ENCODE measurements at regions of chr19 and their contacts with region 1.

Region 1: DNA sequence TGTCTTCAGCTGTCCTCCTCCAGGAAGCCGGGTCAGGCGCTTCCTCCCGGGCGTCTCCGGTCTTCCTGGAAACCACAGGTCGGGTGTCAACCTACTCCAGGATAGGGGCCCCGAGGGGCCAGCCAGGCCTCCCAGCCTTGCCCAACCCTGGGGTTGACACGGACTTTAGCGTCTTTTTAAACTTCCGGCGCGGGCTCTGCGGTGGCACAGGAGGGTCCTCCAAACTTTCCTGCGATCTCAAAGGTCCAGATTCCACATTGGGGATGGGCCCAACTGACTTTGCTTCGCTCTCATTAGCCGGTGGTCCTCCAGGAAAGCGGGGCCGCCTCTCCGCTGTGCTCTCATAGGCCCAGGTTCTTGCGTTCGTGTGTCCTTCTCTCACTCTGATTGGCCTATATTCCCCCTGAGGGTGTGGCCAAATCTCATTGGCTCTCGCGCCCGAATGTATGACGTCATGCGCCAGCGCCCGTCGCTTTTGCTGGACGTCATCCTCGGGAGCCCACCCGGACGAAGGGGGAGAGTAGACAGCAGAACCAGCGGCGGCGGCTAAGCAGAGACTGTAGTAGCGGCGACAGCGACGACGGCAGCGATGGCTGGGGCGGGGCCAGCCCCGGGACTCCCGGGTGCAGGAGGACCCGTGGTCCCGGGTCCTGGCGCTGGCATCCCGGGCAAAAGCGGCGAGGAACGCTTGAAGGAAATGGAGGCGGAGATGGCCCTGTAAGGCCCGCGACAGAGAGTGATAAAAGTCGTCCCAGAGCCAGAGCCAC is at the start of gene RBM42:
- DNase-seq: peak; percentile 92 to 99 (median 97)
- ATAC-seq: peak; percentile 99 to 100 (median 100)
- H3K4me3 ChIP-seq: peak within 1 kb of the TSS; percentile 82 to 97
- H3K4me3 Mint-ChIP-seq: peak within 1 kb of the TSS; percentile 93 to 100 (median 100)
- H3K27ac ChIP-seq: peak within 1 kb of the TSS; percentile 77
- H3K27ac Mint-ChIP-seq: peak within 1 kb of the TSS; percentile 97 to 98
- H3K4me1 ChIP-seq: peaks cover 4 to 18% of the 10 kb centered on the region in 2 experiments
- H3K4me1 Mint-ChIP-seq: peaks cover 25 to 29% (median 25%) of the 10 kb centered on the region in 3 donors
- H3K27me3 ChIP-seq: no peaks in the 10 kb centered on the region
- H3K27me3 Mint-ChIP-seq: peaks cover 0 to 3% of the 10 kb centered on the region in 2 donors
- total RNA-seq, gene RBM42: 37.6 to 74.0 (median 68.4) TPM

Region 2: DNA sequence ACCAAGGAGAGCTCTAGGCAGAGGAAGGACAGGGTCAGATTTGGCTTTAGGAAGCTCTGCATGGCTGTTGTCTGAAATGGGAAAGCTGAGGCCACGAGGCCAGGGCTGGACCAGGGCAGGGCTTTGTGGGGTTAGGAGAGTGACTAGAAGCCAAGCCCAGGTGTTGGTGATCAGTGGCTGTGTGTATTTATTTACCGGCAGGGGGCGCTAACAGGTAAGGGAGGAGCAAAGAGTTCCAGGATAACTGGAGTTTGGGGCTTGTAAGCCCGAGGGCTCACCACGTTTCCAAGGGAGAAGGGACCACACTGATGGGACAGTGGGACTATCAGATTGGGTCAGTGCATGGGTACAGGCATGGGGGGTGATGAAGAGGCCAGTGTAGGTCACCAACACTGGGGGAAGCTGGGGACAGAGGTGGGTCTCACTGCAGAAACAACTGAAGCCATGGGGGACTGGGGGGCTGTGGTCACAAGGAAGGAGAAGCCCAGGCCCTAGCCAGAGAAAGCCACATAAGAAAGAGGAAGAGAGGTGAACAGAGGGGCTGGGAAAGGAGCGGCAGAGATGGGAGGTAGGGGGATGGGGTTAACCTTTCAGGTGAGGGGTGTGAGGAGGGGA is 79.5 kb before region 1 on chr19:
- CTCF ChIA-PET with region 1: no interaction called
- POLR2A ChIA-PET with region 1: no interaction called
- DNase-seq: peak in 31 of 35 experiments; percentile 11 to 84 (median 46)
- ATAC-seq: no peak
- H3K4me3 ChIP-seq: no peak overlapping the region
- H3K4me3 Mint-ChIP-seq: peak overlapping the region in 1 of 3 donors; percentile 44
- H3K27ac ChIP-seq: no peak overlapping the region
- H3K27ac Mint-ChIP-seq: no peak overlapping the region
- H3K4me1 ChIP-seq: peaks cover 10 to 35% of the 10 kb centered on the region in 2 experiments
- H3K4me1 Mint-ChIP-seq: peaks cover 34 to 37% (median 35%) of the 10 kb centered on the region in 3 donors
- H3K27me3 ChIP-seq: no peaks in the 10 kb centered on the region
- H3K27me3 Mint-ChIP-seq: no peaks in the 10 kb centered on the region

Region 3: GRCh38 chr19:35596366-35596999 is 32.3 kb before region 1 on chr19:
- CTCF ChIA-PET with region 1: no interaction called
- POLR2A ChIA-PET with region 1: no interaction called
- DNase-seq: no peak
- ATAC-seq: peak in 1 of 4 experiments; percentile 56
- H3K4me3 ChIP-seq: no peak overlapping the region
- H3K4me3 Mint-ChIP-seq: no peak overlapping the region
- H3K27ac ChIP-seq: no peak overlapping the region
- H3K27ac Mint-ChIP-seq: no peak overlapping the region
- H3K4me1 ChIP-seq: no peaks in the 10 kb centered on the region
- H3K4me1 Mint-ChIP-seq: peaks cover 0 to 2% (median 0%) of the 10 kb centered on the region in 3 donors
- H3K27me3 ChIP-seq: peaks cover 0 to 16% of the 10 kb centered on the region in 2 experiments
- H3K27me3 Mint-ChIP-seq: peaks cover 5 to 6% of the 10 kb centered on the region in 2 donors

Region 4: DNA sequence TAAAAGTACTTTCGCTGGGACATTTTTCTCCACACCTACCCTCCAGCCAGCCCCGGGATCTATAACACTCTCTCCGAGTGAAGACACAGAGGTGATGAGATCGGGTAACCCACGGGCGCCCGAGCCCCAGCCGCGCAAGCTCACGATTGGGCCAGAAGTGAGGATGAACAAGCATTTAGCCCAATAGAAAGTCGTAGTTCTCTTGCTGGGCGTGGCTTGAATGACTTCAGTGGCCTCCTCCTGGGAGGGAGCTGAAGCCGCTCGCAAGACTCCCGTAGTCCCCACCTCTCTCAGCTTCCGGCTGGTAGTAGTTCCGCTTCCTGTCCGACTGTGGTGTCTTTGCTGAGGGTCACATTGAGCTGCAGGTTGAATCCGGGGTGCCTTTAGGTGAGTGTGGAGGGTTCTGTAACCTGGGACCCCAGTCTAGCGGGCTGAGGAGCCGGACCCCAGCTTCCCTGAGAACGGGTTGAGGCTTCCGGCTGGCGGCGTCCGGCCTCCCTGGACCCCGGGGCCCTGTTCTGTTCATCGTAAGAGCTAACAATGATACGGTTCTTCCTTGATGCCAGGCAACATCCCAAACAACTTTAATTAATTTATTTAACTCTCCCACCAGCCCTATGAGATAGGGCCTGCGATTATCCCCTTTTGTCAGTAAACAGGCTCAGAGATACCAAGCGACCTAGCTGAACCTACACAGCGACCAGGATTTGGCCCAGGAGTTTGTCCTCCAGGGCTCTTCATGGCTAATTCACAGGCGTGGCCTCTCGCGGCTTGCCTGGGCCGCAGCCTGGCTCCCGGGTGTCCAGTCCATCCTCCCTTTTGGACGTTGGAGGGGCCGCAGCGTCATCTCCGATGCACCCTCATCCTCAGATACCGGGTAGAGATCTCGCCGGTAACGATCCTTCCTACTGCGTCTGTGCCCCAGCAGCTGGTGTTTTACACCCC is 19.5 kb after region 1 on chr19 and contains the start of gene COX6B1:
- CTCF ChIA-PET with region 1: no interaction called
- POLR2A ChIA-PET with region 1: interaction called, 14 to 15 read pairs
- DNase-seq: peak; percentile 74 to 97 (median 92)
- ATAC-seq: peak; percentile 70 to 73 (median 72)
- H3K4me3 ChIP-seq: peak within 1 kb of the TSS; percentile 83 to 89
- H3K4me3 Mint-ChIP-seq: peak within 1 kb of the TSS; percentile 95 to 99 (median 96)
- H3K27ac ChIP-seq: peak within 1 kb of the TSS; percentile 75
- H3K27ac Mint-ChIP-seq: peak within 1 kb of the TSS; percentile 87 to 95
- H3K4me1 ChIP-seq: peaks cover 8 to 57% of the 10 kb centered on the region in 2 experiments
- H3K4me1 Mint-ChIP-seq: peaks cover 45 to 58% (median 51%) of the 10 kb centered on the region in 3 donors
- H3K27me3 ChIP-seq: peaks cover 0 to 2% of the 10 kb centered on the region in 2 experiments
- H3K27me3 Mint-ChIP-seq: no peaks in the 10 kb centered on the region
- total RNA-seq, gene COX6B1: 199 to 248 (median 225) TPM

Region 5: GRCh38 chr19:37484406-37485115 is 1855.8 kb after region 1 on chr19:
- CTCF ChIA-PET with region 1: no interaction called
- POLR2A ChIA-PET with region 1: no interaction called
- DNase-seq: no peak
- ATAC-seq: no peak
- H3K4me3 ChIP-seq: no peak overlapping the region
- H3K4me3 Mint-ChIP-seq: peak overlapping the region in 1 of 3 donors; percentile 17
- H3K27ac ChIP-seq: no peak overlapping the region
- H3K27ac Mint-ChIP-seq: no peak overlapping the region
- H3K4me1 ChIP-seq: no peaks in the 10 kb centered on the region
- H3K4me1 Mint-ChIP-seq: no peaks in the 10 kb centered on the region
- H3K27me3 ChIP-seq: no peaks in the 10 kb centered on the region
- H3K27me3 Mint-ChIP-seq: no peaks in the 10 kb centered on the region